Sigmoid colon (tissue), 7 donors: ENCODE measurements at regions of chr9 and their contacts with region 1.

Region 1: DNA sequence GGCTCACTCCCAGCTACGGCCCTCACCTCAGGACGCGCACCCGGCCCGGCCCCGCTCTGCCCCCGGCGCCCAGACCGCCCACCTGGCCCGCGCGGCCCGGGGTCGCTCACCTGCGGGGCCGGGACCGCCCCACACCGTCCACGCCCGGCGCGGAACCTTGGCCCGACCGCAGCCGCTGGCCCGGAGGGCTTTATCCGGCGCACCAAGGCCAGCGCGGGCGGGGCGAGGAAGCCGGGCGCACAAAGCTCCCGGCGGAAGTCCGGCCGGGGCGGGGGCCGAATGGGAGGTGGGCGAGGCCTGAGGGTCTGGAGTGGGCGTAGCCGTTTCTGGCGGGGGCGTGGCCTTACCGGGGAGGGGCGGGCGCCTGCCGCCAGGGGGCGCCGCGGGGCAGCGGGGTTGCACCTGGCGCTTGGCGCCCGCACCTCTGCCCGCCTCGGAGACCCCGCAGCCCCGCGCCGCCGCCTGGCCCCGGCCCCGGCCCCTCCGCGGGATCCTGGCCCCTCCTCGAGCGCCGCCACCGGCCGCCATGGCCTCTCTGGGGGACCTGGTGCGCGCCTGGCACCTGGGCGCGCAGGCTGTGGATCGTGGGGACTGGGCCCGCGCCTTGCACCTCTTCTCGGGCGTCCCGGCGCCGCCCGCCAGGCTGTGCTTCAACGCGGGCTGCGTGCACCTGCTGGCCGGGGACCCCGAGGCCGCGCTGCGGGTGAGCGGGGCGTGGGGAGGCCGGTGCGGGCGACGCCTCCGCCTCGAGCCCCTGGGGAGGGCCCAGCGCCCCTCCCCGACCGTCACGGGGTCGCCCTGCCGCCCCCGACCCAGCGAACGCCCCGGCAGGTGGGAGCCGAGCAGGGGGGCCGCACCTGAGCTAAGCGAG is at the starts of genes EXD3 and NOXA1:
- DNase-seq: peak; percentile 96
- H3K4me3 ChIP-seq: peak within 1 kb of the TSS; percentile 37 to 94 (median 86)
- H3K27ac ChIP-seq: peak within 1 kb of the TSS; percentile 72 to 77 (median 73)
- H3K4me1 ChIP-seq: peaks cover 0 to 45% (median 29%) of the 10 kb centered on the region in 4 donors
- H3K27me3 ChIP-seq: no peaks in the 10 kb centered on the region
- CTCF ChIP-seq: peak in 2 of 4 experiments; percentile 22 to 66
- EP300 ChIP-seq: no peak
- POLR2A ChIP-seq: no peak
- total RNA-seq, gene EXD3: 8.9 to 25.5 (median 11.8) TPM
- total RNA-seq, gene NOXA1: 1.4 to 3.3 (median 2.9) TPM

Region 2: GRCh38 chr9:137368431-137369035 is 54.7 kb before region 1 on chr9:
- intact Hi-C with region 1: no loop called
- DNase-seq: peak; percentile 21
- H3K4me3 ChIP-seq: no peak overlapping the region
- H3K27ac ChIP-seq: no peak overlapping the region
- H3K4me1 ChIP-seq: peaks cover 0 to 7% (median 0%) of the 10 kb centered on the region in 4 donors
- H3K27me3 ChIP-seq: no peaks in the 10 kb centered on the region
- CTCF ChIP-seq: no peak
- EP300 ChIP-seq: no peak
- POLR2A ChIP-seq: no peak

Region 3: GRCh38 chr9:137445275-137445807 is 22.1 kb after region 1 on chr9:
- intact Hi-C with region 1: loop called (anchors 2 kb)
- DNase-seq: peak; percentile 87
- H3K4me3 ChIP-seq: no peak overlapping the region
- H3K27ac ChIP-seq: no peak overlapping the region
- H3K4me1 ChIP-seq: peaks cover 0 to 17% (median 16%) of the 10 kb centered on the region in 4 donors
- H3K27me3 ChIP-seq: peaks cover 10 to 39% (median 19%) of the 10 kb centered on the region in 3 donors
- CTCF ChIP-seq: peak; percentile 69 to 85 (median 80)
- EP300 ChIP-seq: no peak
- POLR2A ChIP-seq: no peak

Region 4: DNA sequence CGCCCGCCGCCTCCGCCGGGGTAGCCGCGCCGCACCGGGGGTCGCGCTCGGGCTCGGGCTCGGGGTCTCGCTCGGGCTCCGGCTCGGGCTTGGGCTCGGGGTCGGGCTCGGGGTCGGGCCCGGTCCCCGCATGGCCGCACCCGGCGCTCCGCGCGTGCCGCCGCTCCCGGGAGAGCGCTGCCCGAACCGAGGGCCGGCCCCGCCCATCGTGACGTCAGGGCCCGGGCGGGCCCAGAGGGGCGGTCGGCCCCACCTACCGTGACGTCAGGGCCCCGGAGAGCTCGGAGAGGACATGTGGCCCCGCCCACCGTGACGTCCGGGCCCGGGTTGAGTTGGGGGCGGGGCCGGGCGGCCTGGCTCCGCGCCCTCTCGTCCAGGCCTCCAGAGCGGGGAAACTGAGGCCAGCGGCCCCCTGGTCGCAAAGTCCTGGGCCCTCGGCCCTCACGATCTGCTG is 35.9 kb after region 1 on chr9 and contains the start of gene NSMF:
- intact Hi-C with region 1: loop called (anchors 5 kb)
- DNase-seq: peak; percentile 98
- H3K4me3 ChIP-seq: peak within 1 kb of the TSS; percentile 48 to 79 (median 68)
- H3K27ac ChIP-seq: peak within 1 kb of the TSS; percentile 59 to 80 (median 74)
- H3K4me1 ChIP-seq: peaks cover 0 to 45% (median 35%) of the 10 kb centered on the region in 4 donors
- H3K27me3 ChIP-seq: no peaks in the 10 kb centered on the region
- CTCF ChIP-seq: no peak
- EP300 ChIP-seq: no peak
- POLR2A ChIP-seq: no peak
- total RNA-seq, gene NSMF: 21.8 to 33.8 (median 27.4) TPM

Region 5: GRCh38 chr9:137521405-137521985 is 98.3 kb after region 1 on chr9:
- intact Hi-C with region 1: loop called (anchors 1 kb)
- DNase-seq: no peak
- H3K4me3 ChIP-seq: no peak overlapping the region
- H3K27ac ChIP-seq: no peak overlapping the region
- H3K4me1 ChIP-seq: no peaks in the 10 kb centered on the region
- H3K27me3 ChIP-seq: no peaks in the 10 kb centered on the region
- CTCF ChIP-seq: no peak
- EP300 ChIP-seq: no peak
- POLR2A ChIP-seq: no peak

Region 6: GRCh38 chr9:137578518-137579258 is 155.4 kb after region 1 on chr9 and contains the start of gene DPH7:
- intact Hi-C with region 1: no loop called
- DNase-seq: peak; percentile 96
- H3K4me3 ChIP-seq: peak within 1 kb of the TSS; percentile 78 to 98 (median 87)
- H3K27ac ChIP-seq: peak within 1 kb of the TSS; percentile 87 to 89 (median 88)
- H3K4me1 ChIP-seq: peaks cover 0 to 50% (median 35%) of the 10 kb centered on the region in 4 donors
- H3K27me3 ChIP-seq: no peaks in the 10 kb centered on the region
- CTCF ChIP-seq: peak; percentile 75 to 91 (median 81)
- EP300 ChIP-seq: no peak
- POLR2A ChIP-seq: peak in 1 of 2 donors; percentile 22
- total RNA-seq, gene DPH7: 28.5 to 43.6 (median 29.0) TPM